ENCODE measurements at regions of chr11 and their contacts with region 1.

Region 1: DNA sequence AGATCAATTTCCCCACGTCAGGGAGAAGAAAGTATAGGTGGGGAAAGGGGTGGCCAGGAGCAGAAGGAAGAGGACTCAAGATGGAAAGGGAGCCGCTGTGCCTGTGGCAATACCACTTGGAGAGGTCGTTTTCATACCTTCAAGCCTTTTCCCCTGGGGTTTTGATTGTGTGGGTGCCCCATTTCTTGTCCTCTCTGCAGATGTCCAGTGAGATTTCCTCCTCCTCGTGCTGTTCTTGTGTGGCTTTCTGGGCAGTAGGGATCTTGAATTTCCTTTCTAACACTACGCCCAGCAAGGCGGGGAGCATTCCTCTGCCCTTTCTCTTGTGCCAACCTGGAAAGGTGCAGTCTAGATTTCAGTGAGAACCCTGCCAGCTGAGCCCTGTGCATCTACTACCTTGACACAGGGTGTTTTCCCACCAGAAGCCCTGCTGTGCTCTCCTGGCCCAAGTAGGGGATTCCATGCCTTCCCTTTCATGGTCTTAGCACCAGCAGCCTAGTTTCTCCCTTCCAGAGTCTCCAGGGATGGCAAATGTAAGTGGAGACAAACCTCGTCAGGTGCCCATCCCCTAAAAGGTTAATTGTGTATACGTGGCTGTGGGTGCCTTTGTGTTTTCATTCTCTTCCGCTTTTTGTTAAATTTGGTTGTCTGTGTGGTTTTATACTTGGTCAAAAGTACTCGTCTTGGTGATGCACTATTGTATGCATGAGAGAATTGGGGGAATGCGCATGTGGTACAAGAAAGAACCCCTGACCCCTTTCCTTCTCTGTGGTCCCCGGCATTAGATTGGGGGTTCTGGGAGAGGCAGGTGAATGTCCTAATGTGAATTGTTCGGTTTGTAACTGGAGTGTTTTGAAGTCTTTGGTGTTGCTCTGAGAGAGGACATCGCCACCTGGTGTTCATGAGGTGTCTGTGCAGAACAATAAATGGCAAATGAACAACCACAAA is 71.4 kb upstream of the MPEG1 start:
- DNase-seq: peak; percentile 63
- ATAC-seq: peak; percentile 81
- H3K4me3 Mint-ChIP-seq: peak overlapping the region; percentile 17
- H3K27ac Mint-ChIP-seq: no peak overlapping the region
- H3K4me1 Mint-ChIP-seq: peaks cover 14% of the 10 kb centered on the region
- H3K27me3 Mint-ChIP-seq: peaks cover 9% of the 10 kb centered on the region

Region 2: DNA sequence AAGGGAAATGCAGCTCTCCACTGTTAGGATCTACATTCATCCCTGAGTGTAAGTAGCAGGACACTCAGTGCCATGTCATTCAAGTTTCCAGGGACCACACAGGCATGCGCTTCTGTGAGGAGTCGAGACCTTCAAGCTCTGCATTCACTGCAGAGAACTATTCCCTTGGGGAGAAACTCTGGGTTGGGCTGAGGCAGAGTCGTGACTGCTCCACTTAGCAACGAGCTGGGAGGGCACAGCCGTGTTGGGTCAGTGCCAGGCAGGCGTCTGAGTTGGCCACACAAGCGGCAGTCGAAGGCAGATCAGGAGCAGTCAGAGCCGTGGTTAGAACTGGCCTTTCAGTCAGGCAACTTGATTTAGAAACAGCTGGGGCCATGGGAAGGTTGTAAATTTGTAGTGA is 86.1 kb before region 1 on chr11:
- CTCF ChIA-PET with region 1: no interaction called
- POLR2A ChIA-PET with region 1: no interaction called
- intact Hi-C with region 1: no loop called
- DNase-seq: no peak
- ATAC-seq: no peak
- H3K4me3 Mint-ChIP-seq: no peak overlapping the region
- H3K27ac Mint-ChIP-seq: no peak overlapping the region
- H3K4me1 Mint-ChIP-seq: peaks cover 16% of the 10 kb centered on the region
- H3K27me3 Mint-ChIP-seq: peaks cover 2% of the 10 kb centered on the region

Region 3: GRCh38 chr11:59207988-59208451 is 76.1 kb before region 1 on chr11:
- CTCF ChIA-PET with region 1: no interaction called
- POLR2A ChIA-PET with region 1: no interaction called
- intact Hi-C with region 1: loop called (anchors 2 to 5 kb)
- DNase-seq: peak; percentile 52
- ATAC-seq: peak; percentile 78
- H3K4me3 Mint-ChIP-seq: no peak overlapping the region
- H3K27ac Mint-ChIP-seq: peak overlapping the region; percentile 17
- H3K4me1 Mint-ChIP-seq: peaks cover 32% of the 10 kb centered on the region
- H3K27me3 Mint-ChIP-seq: peaks cover 22% of the 10 kb centered on the region

Region 4: DNA sequence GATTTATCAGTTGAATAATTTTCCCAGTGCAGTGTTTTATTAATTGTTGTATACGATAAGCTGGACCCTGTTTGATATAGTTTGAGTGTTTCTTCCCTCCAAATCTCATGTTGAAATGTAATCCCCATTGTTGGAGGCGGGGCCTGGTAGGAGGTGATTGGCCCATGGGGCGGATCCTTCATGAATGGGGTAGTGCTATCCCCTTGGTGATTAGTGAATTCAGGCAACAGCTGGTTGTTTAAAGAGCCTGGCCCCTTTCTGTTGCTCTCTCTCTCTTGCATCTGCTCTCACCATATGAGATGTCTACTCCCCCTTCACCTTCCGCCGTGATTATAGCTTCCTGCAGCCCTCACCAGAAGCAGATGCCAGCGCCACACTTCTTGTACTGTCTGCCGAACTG is 153.7 kb after region 1 on chr11:
- CTCF ChIA-PET with region 1: no interaction called
- POLR2A ChIA-PET with region 1: no interaction called
- intact Hi-C with region 1: no loop called
- DNase-seq: no peak
- ATAC-seq: no peak
- H3K4me3 Mint-ChIP-seq: no peak overlapping the region
- H3K27ac Mint-ChIP-seq: no peak overlapping the region
- H3K4me1 Mint-ChIP-seq: no peaks in the 10 kb centered on the region
- H3K27me3 Mint-ChIP-seq: peaks cover 3% of the 10 kb centered on the region

Region 5: DNA sequence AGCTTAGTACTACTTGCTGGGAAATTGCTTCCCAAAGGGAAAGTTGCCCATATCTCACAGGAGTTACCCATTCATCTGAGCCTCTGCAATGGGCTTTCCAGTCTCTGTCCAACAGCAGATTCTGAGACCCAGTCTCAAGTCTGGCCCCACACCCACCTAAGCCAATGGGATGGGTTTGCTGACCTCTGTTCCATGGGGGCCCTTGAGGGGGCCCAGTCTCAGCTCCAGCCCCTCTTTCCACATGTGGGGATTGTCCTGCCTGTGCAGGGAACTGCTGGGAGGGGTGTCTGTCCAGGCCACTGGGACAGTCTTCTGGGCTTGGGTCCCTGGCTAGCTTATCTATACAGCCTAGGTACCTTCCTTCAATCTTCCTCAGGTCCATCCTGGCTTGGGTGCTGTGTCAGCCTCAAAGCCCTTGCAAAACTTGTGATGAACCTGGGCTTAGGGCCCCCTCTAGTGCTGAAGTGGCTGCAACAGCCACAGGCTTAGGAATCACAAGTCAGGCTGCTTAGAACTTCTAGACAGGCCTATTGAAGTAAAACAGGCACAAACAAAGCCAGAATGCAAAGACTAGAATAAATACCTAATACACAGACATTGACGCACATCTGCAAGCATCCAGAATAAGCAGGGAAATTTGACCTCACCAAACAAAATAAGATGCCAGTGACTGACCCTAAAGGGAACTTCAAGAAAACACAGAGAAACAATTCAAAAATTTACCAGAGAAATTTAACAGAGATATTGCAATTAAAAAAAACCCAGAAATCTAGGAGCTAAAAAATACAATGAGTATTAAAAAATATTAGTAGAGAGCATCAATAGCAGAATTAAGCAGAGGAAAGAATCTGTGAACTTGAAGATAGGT is 396.4 kb after region 1 on chr11:
- CTCF ChIA-PET with region 1: no interaction called
- POLR2A ChIA-PET with region 1: no interaction called
- intact Hi-C with region 1: loop called in 1 of 2 experiments (anchors 5 kb)
- DNase-seq: peak; percentile 73
- ATAC-seq: peak; percentile 92
- H3K4me3 Mint-ChIP-seq: no peak overlapping the region
- H3K27ac Mint-ChIP-seq: no peak overlapping the region
- H3K4me1 Mint-ChIP-seq: peaks cover 10% of the 10 kb centered on the region
- H3K27me3 Mint-ChIP-seq: peaks cover 16% of the 10 kb centered on the region